Gastrocnemius medialis (tissue), 4 donors: ENCODE measurements at regions of chr1 and their contacts with region 1.

Region 1: DNA sequence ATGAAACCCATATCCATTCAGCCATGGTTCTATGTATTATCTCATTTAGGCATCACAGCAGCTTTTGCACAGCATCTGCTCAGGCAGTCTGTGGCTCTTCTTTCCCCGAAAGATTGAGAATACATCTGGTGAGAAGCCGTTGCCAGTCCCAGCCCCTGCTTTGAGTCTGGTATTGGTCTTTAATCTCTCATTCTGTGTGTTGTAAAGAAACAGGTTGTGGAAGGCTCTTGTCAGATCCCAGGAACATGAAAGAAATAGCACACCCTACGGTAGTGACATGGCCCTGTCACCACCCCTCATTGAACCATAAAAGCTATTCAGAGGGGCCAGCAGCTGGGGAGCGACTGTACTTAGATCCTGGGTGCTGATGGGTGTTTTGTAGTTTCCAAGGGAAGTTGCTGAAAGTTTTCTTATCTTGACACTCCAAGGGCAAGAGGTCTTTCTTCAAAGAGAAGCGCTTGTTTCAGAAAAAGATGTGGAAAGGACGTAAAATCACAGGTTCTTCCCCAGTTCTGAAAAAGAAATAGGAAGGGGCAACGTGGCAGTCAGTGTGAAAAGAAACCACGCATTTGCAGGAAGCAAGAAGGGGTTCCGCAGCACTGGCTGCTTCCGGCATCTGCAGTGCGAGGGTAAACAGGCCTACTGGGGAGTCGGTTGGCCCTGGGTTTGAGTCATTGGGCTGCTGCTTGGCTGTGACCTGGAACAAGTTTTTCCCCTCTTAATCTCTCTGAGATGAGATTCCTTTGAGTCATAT is 145.0 kb downstream of the DHRS3 start:
- DNase-seq: no peak
- ATAC-seq: no peak
- H3K4me3 ChIP-seq: no peak overlapping the region
- H3K27ac ChIP-seq: peak overlapping the region; percentile 72 to 88 (median 82)
- H3K4me1 ChIP-seq: peaks cover 65 to 88% of the 10 kb centered on the region in 2 donors
- H3K27me3 ChIP-seq: no peaks in the 10 kb centered on the region
- CTCF ChIP-seq: no peak
- POLR2A ChIP-seq: no peak

Region 2: GRCh38 chr1:11822096-11822495 is 650.9 kb before region 1 on chr1:
- in situ Hi-C with region 1: no loop called
- intact Hi-C with region 1: no loop called
- DNase-seq: no peak
- ATAC-seq: no peak
- H3K4me3 ChIP-seq: no peak overlapping the region
- H3K27ac ChIP-seq: no peak overlapping the region
- H3K4me1 ChIP-seq: no peaks in the 10 kb centered on the region
- H3K27me3 ChIP-seq: no peaks in the 10 kb centered on the region
- CTCF ChIP-seq: no peak
- POLR2A ChIP-seq: no peak

Region 3: DNA sequence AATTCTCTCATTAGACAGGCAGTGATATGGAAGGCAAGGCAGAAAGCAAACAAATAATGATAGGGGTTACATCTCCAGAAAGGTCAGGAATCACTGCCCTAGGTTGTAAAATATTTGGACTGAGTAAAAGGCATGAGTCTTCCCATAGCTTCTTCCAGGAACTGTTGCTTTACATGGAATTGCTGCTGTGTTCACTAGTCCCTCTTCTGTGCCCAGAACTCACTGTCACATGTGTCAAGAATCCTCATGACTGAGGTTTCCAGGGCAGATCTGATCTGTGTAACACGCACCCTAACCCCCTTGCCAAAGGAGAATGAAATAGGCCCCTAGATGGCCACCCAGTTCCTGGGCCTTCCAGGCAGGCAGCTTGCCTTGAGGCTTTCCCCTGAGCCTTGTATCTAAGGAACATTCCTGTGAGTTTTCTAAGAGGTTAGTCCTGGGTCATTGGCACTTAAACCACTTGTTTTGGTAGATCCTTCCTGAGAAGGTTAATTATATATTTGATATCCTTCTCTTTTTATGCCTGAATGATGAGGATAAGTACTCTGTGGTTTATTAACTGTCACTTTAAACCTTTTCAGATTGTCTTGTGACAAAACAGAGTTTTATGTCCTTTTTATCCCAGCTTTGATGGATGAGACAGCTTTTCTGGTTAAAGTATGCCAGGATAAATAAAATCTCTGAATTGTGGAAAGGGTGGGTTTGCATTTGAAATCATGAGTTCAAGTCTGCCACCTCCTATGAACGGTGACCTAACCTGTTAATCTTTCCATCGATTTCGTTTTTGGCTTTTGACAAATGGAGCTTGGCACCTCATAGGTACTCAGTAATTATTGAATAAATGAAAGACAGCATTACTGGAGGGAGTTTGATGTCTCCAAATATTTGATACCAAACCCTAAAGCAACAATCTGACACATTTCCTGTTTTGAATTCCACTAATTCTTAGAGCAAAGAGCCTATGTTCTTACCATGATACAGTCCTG is 18.3 kb before region 1 on chr1:
- in situ Hi-C with region 1: no loop called
- intact Hi-C with region 1: loop called (anchors 2 kb)
- DNase-seq: peak; percentile 85 to 88
- ATAC-seq: peak; percentile 55 to 67
- H3K4me3 ChIP-seq: no peak overlapping the region
- H3K27ac ChIP-seq: peak overlapping the region; percentile 84 to 91 (median 90)
- H3K4me1 ChIP-seq: peaks cover 71 to 84% of the 10 kb centered on the region in 2 donors
- H3K27me3 ChIP-seq: no peaks in the 10 kb centered on the region
- CTCF ChIP-seq: no peak
- POLR2A ChIP-seq: peak in 1 of 2 donors; percentile 37

Region 4: DNA sequence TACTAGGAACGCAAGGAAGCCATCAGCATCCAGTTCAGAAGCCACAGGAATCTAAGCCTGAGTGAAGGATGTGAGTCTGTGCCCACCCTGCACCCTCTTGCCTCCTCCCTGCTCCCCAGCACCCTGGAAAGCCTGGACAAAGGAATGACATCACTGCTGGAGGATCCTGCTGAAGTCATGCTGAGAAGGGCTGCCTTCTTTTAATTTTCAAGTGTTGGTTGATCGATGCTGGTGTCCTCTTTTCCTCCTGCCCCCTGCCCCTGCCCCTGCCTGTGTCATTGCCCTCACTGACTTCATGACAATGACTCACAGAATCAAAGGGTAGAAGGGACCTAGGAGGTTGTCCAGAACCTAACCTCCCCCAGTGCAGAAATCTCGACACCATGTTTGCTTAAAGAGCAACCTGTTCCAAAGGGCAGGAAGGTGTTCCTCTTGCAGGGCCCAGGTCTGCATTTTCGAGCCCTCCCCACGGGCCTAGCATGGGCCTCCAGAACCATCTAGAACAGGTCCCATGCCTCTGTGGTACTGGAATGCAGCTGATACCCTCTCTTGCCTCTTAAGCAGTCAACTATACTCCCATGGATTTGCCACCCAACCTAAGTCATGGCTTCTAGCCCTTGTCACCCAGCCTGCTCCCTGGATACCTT is 135.5 kb after region 1 on chr1:
- in situ Hi-C with region 1: loop called in 1 of 4 experiments (anchors 5 kb)
- intact Hi-C with region 1: no loop called
- DNase-seq: no peak
- ATAC-seq: no peak
- H3K4me3 ChIP-seq: no peak overlapping the region
- H3K27ac ChIP-seq: peak overlapping the region in 3 of 4 donors; percentile 20 to 32 (median 32)
- H3K4me1 ChIP-seq: peaks cover 24 to 46% of the 10 kb centered on the region in 2 donors
- H3K27me3 ChIP-seq: no peaks in the 10 kb centered on the region
- CTCF ChIP-seq: no peak
- POLR2A ChIP-seq: no peak